ENCODE measurements at regions of chr1 and their contacts with region 1.

Region 1: GRCh38 chr1:201481761-201482493 is 12.9 kb upstream of the PHLDA3 start:
- H3K4me3 ChIP-seq: no peak overlapping the region
- H3K27ac ChIP-seq: no peak overlapping the region
- H3K4me1 ChIP-seq: no peaks in the 10 kb centered on the region
- CTCF ChIP-seq: peak; percentile 93

Region 2: GRCh38 chr1:201447911-201448871 is 33.7 kb before region 1 on chr1:
- CTCF ChIA-PET with region 1: interaction called, 94 read pairs
- POLR2A ChIA-PET with region 1: interaction called, 19 read pairs
- H3K4me3 ChIP-seq: no peak overlapping the region
- H3K27ac ChIP-seq: no peak overlapping the region
- H3K4me1 ChIP-seq: 0 out of 2 replicates have a peak, but pooled peaks cover 6% of the 10 kb centered on the region
- CTCF ChIP-seq: peak; percentile 66

Region 3: DNA sequence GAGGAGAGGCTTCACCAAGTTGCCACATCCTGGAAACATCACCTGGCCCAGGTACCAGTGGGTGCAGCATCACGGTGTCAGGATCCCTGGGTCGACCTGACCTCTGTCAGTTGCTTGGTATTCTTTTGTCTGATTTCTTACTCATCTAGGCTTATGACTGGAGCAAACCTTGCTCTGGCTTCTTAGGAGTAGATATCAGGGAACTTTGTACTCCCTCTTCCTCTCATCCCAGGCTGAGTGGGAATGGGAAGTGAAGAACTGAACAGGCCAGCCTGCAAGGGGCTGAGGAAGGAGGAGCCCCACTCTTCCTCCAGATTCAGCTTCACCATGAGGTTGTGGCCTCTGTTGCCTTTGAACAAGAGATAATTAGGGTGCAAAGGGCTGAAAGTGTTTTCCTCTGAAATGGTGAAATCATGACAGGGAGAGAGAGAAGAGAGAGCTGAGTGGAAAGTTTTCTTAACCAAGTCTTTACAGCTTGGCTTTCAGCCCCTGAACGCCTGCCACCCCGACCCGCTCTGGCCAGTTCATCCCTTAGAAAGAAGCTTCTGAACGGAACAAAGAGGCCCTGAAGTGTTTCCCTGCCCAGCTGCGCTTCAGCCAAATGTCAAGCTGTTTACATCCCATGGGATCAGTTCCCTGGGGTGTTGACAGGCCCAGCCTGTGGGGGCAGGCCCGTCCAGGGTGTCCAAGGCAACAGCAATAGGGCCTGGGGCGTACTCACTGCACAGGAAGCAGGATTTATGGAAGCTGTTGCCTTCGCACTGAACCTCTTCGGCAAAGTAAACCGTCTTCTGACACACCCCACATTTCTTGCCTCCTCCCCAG is 13.8 kb after region 1 on chr1:
- CTCF ChIA-PET with region 1: interaction called, 61 read pairs
- POLR2A ChIA-PET with region 1: interaction called, 5 read pairs
- H3K4me3 ChIP-seq: no peak overlapping the region
- H3K27ac ChIP-seq: no peak overlapping the region
- H3K4me1 ChIP-seq: no peaks in the 10 kb centered on the region
- CTCF ChIP-seq: no peak

Region 4: DNA sequence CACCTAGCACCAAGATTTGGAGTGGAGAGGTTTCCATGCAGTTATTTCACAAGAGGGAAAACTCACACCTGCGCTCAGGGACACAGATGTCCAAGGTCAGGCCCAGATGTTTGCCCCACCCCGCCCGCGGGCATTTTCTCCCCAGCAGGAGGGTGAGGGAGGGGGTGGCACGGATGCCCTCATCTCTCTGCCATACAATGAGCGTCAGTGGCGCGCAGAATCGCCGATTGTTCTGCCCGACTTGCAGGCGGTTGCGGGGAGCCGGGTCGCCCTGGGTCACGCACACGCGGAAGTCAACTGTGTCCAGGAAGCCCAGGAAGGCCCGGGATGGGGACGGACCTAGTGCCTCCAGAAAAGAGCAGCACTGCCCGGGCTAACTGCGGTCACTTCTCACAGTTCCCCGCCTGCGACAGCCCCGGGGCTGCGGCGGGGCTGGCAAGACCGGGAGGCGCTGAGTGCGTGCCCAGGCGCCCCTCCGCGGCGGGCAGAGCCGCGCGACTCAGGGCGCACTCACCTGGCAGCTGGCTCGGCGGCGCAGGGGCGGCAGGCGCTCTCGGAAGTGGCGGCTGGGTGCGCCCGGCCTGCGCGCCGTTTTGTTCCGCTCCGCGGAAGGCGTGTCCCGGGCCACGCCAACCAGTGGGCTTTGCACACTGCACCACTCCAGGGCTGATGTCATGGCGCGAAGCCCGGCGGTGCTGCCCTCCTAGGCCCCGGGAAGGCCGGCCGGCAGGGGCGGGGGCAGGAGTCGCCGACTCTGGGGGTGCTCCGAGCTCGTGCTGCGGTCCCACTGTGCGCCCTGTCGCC is 24.8 kb after region 1 on chr1 and contains the start of gene CSRP1:
- CTCF ChIA-PET with region 1: interaction called, 471 read pairs
- POLR2A ChIA-PET with region 1: interaction called, 42 read pairs
- H3K4me3 ChIP-seq: peak within 1 kb of the TSS; percentile 62
- H3K27ac ChIP-seq: peak within 1 kb of the TSS; percentile 6; the same call in 1 of the 2 replicates
- H3K4me1 ChIP-seq: no peaks in the 10 kb centered on the region; the same call in none of the 2 replicates
- CTCF ChIP-seq: no peak

Region 5: DNA sequence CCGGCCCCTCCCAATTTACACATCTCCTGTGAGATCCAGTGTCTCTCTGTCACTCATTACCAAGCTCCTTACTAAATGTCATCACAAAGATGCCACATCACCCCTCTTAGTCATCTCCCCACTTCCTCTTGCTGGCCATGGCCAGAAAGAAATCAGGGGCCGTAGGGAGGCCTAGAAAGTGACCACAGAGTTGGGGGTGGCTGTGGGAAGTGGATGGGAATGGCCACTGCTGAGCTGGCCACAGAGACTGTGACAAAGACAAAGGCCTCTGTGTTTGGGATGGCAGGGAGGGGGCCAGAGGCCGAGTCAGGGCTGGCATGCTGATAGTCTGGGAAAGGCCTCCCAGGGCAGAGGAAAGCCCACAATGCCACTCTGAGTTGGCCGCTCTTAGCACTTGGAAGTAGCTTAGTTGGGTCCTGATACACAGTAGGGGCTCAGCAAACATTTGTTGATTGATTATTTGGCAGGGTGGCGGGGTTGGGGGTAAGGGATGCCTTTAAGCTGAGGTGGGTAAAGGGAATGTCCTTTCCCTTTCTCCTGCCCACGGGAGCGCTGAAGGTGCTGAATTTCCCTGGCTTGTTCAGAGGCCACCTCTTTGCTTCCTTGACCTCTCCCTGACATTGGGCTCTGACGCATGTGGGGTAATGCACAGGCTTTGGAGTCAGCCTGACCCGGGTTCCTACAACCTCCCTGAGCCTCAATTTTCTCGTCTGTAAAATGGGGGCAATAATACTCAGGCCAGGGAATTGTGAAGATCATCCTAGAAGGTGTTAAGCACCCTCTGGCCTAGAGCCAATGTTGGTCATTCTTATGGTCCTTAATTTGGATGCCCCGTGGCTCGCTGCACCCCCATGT is 70.2 kb after region 1 on chr1:
- CTCF ChIA-PET with region 1: interaction called, 14 read pairs
- POLR2A ChIA-PET with region 1: no interaction called
- H3K4me3 ChIP-seq: no peak overlapping the region
- H3K27ac ChIP-seq: no peak overlapping the region
- H3K4me1 ChIP-seq: no peaks in the 10 kb centered on the region
- CTCF ChIP-seq: no peak

Region 6: GRCh38 chr1:201709564-201710295 is 227.8 kb after region 1 on chr1:
- CTCF ChIA-PET with region 1: interaction called, 24 read pairs
- POLR2A ChIA-PET with region 1: no interaction called
- H3K4me3 ChIP-seq: no peak overlapping the region
- H3K27ac ChIP-seq: no peak overlapping the region
- H3K4me1 ChIP-seq: peaks cover 12% of the 10 kb centered on the region
- CTCF ChIP-seq: peak; percentile 83

Measured in HEK293 (cell line).